H1 (cell line): ENCODE measurements at regions of chr2 and their contacts with region 1.

Region 1: DNA sequence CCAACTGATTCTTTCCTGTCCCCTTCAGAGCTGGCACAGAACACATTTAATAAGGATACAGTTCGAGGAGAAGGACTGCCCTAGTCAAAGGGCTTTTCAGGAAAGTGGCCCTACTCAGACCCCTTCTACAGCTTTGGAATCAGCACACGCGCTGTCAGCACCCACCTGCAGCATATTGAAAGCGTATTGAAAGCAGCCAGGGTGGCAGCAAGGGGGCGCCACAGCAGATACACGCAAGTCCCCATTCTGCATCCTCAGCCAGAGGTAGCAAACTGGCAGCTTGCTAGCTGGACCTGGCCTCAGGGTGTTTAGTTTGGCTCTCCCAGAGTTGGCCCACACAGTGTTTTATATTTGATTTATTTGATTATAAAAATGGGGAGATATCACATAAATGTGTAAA is 101.0 kb upstream of the NT5C1B start:
- DNase-seq: peak; percentile 47 to 76
- H3K4me3 ChIP-seq: no peak overlapping the region
- H3K27ac ChIP-seq: no peak overlapping the region
- H3K4me1 ChIP-seq: no peaks in the 10 kb centered on the region
- H3K27me3 ChIP-seq: no peaks in the 10 kb centered on the region
- CTCF ChIP-seq: peak; percentile 75 to 95 (median 93)
- EP300 ChIP-seq: no peak
- POLR2A ChIP-seq: no peak
- RAD21 ChIP-seq: peak; percentile 61 to 67

Region 2: GRCh38 chr2:18677280-18677679 is 13.1 kb before region 1 on chr2:
- CTCF ChIA-PET with region 1: interaction called, 14 read pairs
- POLR2A ChIA-PET with region 1: no interaction called
- DNase-seq: no peak
- H3K4me3 ChIP-seq: no peak overlapping the region
- H3K27ac ChIP-seq: no peak overlapping the region
- H3K4me1 ChIP-seq: no peaks in the 10 kb centered on the region
- H3K27me3 ChIP-seq: no peaks in the 10 kb centered on the region
- CTCF ChIP-seq: no peak
- EP300 ChIP-seq: no peak
- POLR2A ChIP-seq: no peak
- RAD21 ChIP-seq: no peak

Region 3: DNA sequence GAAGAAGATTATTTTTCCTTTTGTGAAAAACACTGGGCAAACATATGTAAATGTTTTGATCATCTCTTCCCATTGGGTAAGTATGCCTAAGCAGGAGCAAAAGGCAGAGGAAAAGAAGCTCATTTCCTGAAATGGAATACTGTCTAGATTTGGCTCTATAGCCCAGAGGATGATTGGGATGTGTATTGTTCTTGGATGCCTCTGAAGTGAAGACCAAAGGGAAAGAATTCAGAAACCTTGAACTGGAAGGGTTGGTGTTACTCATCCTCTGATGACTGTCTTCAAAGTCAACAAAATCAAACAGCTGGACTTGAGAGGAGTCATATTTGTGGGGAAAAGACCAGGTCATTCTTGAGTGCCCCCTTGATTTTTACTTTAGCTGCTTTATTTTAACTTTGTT is 11.6 kb after region 1 on chr2:
- CTCF ChIA-PET with region 1: interaction called, 23 read pairs
- POLR2A ChIA-PET with region 1: no interaction called
- DNase-seq: no peak
- H3K4me3 ChIP-seq: no peak overlapping the region
- H3K27ac ChIP-seq: no peak overlapping the region
- H3K4me1 ChIP-seq: no peaks in the 10 kb centered on the region
- H3K27me3 ChIP-seq: no peaks in the 10 kb centered on the region
- CTCF ChIP-seq: no peak
- EP300 ChIP-seq: no peak
- POLR2A ChIP-seq: no peak
- RAD21 ChIP-seq: no peak